K562 (cell line): ENCODE measurements at regions of chr1 and their contacts with region 1.

Region 1: DNA sequence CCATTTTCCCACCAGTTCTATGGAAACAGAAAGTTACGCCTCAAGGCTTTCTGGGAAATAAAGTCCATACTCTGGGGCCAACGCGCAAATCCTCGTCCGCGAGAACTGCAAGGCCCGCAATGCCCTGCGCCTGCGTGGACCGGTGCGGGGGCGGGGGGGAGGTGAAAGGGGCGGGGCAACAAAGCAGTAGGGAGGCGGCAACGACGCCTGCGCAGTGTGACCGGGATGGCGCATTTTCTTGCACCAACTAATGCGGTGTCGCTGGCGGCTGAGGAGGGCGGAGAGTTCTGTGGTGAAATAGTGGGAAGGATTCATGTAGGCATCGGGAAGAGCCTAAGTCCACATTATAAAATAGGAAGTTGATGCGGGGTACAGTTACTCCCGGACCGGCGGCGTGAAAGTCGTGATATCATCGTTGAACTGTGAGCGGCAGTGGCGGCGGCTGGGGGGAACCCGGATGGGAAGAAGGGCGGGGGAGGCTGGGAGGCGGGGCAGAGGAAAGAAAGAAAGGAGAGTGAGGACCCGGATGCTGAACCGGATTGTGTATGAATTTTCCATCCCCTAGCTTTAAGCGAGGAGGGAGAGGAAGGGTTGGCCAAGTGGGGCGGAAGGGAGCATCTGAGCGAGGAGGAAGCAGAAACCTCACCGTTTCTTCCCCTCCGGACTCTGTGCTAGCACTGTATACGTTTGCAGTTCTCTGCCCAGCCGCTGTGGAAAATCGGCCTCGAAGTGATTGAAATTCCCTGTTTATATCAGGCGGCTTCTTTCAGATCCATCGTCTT is at the start of gene GGPS1:
- DNase-seq: peak; percentile 95 to 100 (median 98)
- ATAC-seq: peak; percentile 82
- H3K4me3 ChIP-seq: peak within 1 kb of the TSS; percentile 82
- H3K27ac ChIP-seq: peak within 1 kb of the TSS; percentile 97
- H3K4me1 ChIP-seq: peaks cover 12 to 13% of the 10 kb centered on the region in 2 experiments; a peak in 3 of 5 replicates
- H3K27me3 ChIP-seq: no peaks in the 10 kb centered on the region
- CTCF ChIP-seq: 0 out of 6 replicates have a peak, but pooled peaks of 2 of the 3 experiments have one; percentile 0 to 44
- EP300 ChIP-seq: no peak; the same call in 1 of the 2 replicates
- POLR2A ChIP-seq: peak; percentile 99
- RAD21 ChIP-seq: no peak; a peak in 1 of 4 replicates
- polyA plus RNA-seq, gene GGPS1: 97.8 to 104 TPM

Region 2: DNA sequence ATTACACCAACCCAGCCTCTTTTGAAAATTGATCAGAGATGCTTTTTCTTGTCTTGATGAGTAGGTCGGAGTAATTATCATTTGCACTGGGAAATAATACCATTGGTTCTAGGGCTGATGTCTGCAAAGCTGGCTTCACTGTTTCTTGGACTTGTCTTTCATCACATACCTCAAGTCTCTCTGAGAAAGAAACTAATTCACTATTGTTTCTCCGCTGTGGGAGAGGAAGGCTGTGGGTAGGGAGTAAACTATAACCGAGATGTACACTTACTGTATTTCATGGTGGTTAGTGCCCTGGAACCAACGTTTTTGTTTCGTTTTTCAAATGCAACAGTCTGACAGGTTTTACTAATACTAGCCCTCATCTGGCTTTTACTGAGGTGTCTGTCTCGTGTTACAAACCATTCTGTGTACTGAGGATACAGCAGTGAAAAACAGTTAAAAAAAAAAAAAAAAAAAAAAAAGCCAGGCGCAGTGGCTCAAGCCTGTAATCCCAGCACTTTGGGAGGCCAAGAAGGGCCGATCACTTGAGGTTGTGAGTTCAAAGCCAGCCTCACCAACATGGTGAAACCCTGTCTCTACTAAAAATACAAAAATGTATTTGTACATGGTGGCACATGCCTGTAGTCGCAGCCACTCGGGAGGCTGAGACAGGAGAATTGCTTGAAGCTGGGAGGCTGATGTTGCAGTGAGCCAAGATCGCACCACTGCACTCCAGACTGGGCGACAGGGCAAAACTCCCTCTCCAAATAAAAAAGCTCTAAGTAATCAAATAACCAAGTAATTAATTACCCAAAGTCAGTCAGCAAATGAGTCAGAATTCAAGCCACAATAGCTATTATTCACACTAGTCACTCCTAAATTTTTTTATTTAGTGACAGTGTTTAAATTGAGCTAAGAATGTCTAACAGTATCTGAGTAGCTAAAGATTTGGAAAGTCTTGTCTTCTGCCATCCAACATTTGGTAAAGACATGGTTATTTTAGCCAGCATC is 223.2 kb before region 1 on chr1:
- CTCF ChIA-PET with region 1: no interaction called
- POLR2A ChIA-PET with region 1: no interaction called
- in situ Hi-C with region 1: no loop called
- intact Hi-C with region 1: no loop called
- DNase-seq: peak in 1 of 4 experiments; percentile 30
- ATAC-seq: peak; percentile 20
- H3K4me3 ChIP-seq: no peak overlapping the region
- H3K27ac ChIP-seq: peak overlapping the region; percentile 61; the same call in 2 of the 3 replicates
- H3K4me1 ChIP-seq: peaks cover 5 to 14% of the 10 kb centered on the region in 2 experiments; a peak in 4 of 5 replicates
- H3K27me3 ChIP-seq: no peaks in the 10 kb centered on the region
- CTCF ChIP-seq: no peak
- EP300 ChIP-seq: no peak
- POLR2A ChIP-seq: no peak
- RAD21 ChIP-seq: no peak; a peak in 1 of 4 replicates

Region 3: DNA sequence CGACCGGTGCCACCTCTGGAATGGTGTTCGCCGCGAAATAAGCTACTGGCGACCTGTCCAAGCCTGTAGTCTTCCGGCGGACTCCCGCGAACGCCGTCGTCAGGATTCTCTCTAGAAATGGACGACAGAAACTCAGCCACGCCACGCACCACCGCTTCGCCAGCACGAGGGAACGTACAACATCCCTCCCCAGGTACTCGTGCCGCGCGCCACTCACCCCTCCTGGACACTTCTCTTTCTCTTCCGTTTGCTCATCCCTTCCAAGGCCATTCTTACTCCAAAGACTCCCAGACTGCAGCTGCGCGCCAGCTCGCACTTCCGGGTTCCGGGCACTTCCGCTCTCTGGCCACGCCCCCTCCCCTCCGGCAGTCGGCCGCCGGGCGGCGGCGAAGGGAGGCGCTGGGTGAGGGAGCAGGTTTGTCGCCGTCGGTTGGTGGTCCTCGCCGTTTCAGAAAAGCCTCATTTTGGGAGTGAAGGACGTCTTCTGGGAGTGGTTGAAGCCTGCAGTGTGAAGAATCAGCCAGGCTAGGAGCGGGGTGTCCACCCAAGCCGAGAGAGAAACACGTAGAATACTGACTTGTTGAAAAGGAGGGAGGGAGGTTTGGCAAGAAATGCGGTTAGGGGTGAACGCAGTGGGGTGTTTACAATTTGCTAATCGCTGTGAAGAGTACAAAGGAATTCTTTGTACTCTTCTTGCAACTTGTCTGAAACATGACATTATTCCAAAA is 167.4 kb before region 1 on chr1 and contains the start of gene RBM34:
- CTCF ChIA-PET with region 1: no interaction called
- POLR2A ChIA-PET with region 1: no interaction called
- in situ Hi-C with region 1: no loop called
- intact Hi-C with region 1: loop called (anchors 1 kb)
- DNase-seq: peak; percentile 95 to 97 (median 96)
- ATAC-seq: peak; percentile 97
- H3K4me3 ChIP-seq: peak within 1 kb of the TSS; percentile 78
- H3K27ac ChIP-seq: peak within 1 kb of the TSS; percentile 92
- H3K4me1 ChIP-seq: peaks cover 7 to 9% of the 10 kb centered on the region in 2 experiments; a peak in 3 of 5 replicates
- H3K27me3 ChIP-seq: no peaks in the 10 kb centered on the region; a peak in 1 of 5 replicates
- CTCF ChIP-seq: peak in 2 of 3 experiments; percentile 30 to 52; a peak in 5 of 6 replicates
- EP300 ChIP-seq: peak; percentile 7; the same call in 1 of the 2 replicates
- POLR2A ChIP-seq: peak; percentile 99
- RAD21 ChIP-seq: peak in 1 of 2 experiments; percentile 23; a peak in 1 of 4 replicates
- polyA plus RNA-seq, gene RBM34: 116 to 141 TPM

Region 4: GRCh38 chr1:235304549-235305451 is 23.7 kb before region 1 on chr1:
- CTCF ChIA-PET with region 1: no interaction called
- POLR2A ChIA-PET with region 1: interaction called, 12 read pairs
- in situ Hi-C with region 1: no loop called
- intact Hi-C with region 1: no loop called
- DNase-seq: no peak
- ATAC-seq: peak; percentile 15; the same call in 1 of the 3 replicates
- H3K4me3 ChIP-seq: no peak overlapping the region
- H3K27ac ChIP-seq: peak overlapping the region; percentile 52; the same call in 1 of the 3 replicates
- H3K4me1 ChIP-seq: no peaks in the 10 kb centered on the region; a peak in 2 of 5 replicates
- H3K27me3 ChIP-seq: no peaks in the 10 kb centered on the region
- CTCF ChIP-seq: no peak
- EP300 ChIP-seq: no peak
- POLR2A ChIP-seq: no peak
- RAD21 ChIP-seq: no peak

Region 5: GRCh38 chr1:235367000-235367908 is 38.7 kb after region 1 on chr1 and contains the start of gene TBCE:
- CTCF ChIA-PET with region 1: no interaction called
- POLR2A ChIA-PET with region 1: interaction called, 5 read pairs
- in situ Hi-C with region 1: no loop called
- intact Hi-C with region 1: loop called (anchors 1 kb)
- DNase-seq: peak; percentile 98 to 100 (median 98)
- ATAC-seq: peak; percentile 98
- H3K4me3 ChIP-seq: peak within 1 kb of the TSS; percentile 56
- H3K27ac ChIP-seq: peak within 1 kb of the TSS; percentile 69
- H3K4me1 ChIP-seq: peaks cover 9 to 16% of the 10 kb centered on the region in 2 experiments; a peak in 4 of 5 replicates
- H3K27me3 ChIP-seq: no peaks in the 10 kb centered on the region
- CTCF ChIP-seq: peak in 1 of 3 experiments; percentile 34; a peak in 1 of 6 replicates
- EP300 ChIP-seq: peak; percentile 36
- POLR2A ChIP-seq: peak; percentile 99
- RAD21 ChIP-seq: no peak; a peak in 1 of 4 replicates
- polyA plus RNA-seq, gene TBCE: 59.0 to 89.8 TPM

Region 6: DNA sequence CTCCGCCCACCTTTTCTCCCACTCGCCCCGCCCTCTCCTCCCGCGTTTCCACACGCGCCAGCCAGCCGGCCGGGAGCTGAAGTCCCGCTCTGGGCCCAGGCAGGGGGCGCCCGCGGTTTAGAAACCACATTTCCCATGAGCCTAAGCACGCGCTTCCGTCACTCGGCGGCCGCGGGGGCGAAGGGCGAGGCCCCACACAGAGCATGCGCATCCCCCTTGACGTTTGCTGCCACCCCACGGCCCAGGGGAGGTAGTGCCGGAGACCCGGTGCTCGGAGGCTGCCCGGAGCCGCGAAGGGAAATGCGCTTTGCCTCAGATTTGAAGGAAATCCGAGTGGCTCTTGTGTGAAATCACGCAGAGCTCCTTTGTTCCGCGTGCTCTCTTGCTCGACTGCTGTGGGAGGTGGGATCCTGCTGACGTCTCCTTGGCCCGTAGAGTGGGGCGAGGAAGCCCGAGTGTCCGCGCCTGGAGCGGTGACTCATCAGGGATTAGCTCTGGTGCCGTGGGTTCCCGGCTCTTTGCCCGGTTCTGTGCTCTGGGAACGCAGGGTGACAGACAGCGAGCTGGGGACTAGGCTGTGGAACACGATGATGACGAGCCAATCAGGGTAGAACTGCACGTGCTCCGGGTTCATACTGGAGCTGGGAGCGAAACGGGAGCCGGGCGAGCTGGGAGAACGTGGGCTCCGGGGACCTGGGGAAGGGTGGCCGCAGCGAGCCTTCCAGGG is 176.1 kb after region 1 on chr1:
- CTCF ChIA-PET with region 1: no interaction called
- POLR2A ChIA-PET with region 1: no interaction called
- in situ Hi-C with region 1: no loop called
- intact Hi-C with region 1: loop called (anchors 2 kb)
- DNase-seq: peak; percentile 97 to 100 (median 98)
- ATAC-seq: peak; percentile 87
- H3K4me3 ChIP-seq: peak overlapping the region; percentile 66
- H3K27ac ChIP-seq: peak overlapping the region; percentile 96
- H3K4me1 ChIP-seq: peaks cover 18 to 21% of the 10 kb centered on the region in 2 experiments; a peak in 4 of 5 replicates
- H3K27me3 ChIP-seq: no peaks in the 10 kb centered on the region
- CTCF ChIP-seq: peak; percentile 90 to 97 (median 91)
- EP300 ChIP-seq: 0 out of 2 replicates have a peak, but pooled peaks have one; percentile 21
- POLR2A ChIP-seq: peak; percentile 97
- RAD21 ChIP-seq: peak; percentile 50 to 57